ENCODE measurements at regions of chr3 and their contacts with region 1.

Region 1: DNA sequence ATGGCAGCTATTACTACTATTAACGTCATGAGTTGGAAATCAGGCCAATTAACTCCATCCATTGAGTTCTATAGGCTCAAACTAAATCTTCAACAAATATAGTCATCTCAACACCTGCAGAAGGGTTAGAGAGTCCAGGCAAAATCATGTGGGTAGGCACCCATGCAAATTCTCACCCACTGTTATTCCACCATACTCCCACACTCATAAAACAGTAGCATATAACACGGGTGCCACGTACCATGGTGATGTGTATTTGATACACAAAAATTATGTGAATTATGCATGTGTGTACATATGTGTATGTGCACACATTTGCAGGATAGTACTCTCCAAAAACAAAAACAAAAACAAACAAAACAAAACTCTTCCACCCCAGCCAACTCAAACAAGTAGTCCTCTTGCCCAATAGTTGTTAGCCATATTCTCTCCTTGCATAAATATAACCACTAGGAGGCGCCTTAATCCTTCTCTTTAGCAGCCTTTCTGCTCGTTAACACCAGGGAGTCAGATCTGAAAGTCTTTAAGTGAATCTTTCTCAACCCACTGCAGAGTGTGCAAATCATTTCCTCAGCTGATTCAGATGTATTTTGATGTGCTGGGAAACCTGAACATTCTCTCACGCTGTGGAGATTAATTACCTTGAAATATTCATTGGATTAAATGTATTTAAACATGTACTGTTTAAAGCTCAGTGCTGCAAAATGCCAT is 38.0 kb upstream of the COPB2 start:
- DNase-seq: no peak

Region 2: GRCh38 chr3:139561959-139562676 is 134.7 kb after region 1 on chr3:
- intact Hi-C with region 1: loop called (anchors 1 kb)
- DNase-seq: peak in 2 of 10 donors; percentile 27 to 33

Region 3: DNA sequence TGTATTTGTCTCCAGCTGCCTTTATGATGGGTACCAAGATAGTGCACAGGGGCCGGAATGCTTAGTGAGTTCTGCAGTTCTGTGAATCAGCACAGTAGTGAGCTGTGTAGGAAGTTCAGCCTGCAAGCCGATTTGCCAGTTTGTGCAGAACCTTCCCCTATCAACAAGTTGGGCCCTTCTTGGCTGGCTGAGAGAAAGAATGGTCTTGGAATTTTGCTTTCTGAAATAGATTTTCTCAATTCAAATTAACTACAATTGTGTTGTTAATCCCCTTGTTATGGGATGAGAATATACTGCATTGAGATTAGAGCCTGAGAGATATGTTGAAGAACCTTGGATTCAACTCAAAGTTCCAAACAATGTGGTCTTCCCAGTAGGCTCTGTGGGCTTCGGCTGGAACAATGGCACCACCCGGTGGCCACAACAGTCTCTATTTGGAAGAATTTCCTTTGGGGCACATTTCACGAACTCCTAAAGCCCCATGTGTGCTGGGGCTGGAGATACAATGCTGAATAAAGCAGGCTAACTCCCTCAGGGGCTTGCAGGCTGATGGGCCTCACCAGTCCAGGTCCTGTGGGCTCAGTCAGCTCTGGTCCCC is 1309.5 kb after region 1 on chr3:
- intact Hi-C with region 1: loop called (anchors 10 kb)
- DNase-seq: peak in 9 of 10 donors; percentile 35 to 93 (median 63)

Region 4: DNA sequence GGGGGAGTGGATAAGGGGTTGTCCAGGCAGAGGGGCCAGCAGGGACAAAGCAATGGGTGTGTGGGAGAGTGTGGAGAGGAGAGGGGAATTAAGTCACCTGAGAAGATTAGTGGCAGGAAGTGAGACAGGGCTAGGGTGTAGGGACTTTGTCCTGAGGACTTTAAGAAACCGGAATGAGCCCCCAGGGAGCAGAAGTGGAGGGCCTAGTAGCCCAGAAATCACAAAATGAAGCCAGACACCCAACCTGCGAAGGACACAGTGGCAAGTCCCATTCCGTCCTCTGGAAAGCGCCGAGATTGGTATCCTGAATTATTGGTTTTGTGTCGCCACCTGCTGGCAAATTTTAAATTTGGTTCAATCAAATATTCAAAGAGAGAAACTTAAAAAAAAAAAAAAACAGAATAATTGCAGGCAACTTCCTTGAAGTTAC is 1436.2 kb after region 1 on chr3:
- intact Hi-C with region 1: loop called (anchors 10 kb)
- DNase-seq: peak in 5 of 10 donors; percentile 18 to 38 (median 22)

Measured in posterior cingulate gyrus (tissue), 11 donors.